Activated T-helper 2 cell treated with anti-CD3 and anti-CD28 coated beads, Interferon-gamma antibody, Interleukin-2, Interleukin-4, amounts not matched to agents 10 μg/mL and 5 μg/mL and 100 μg/mL, durations not matched to agents 14 hours and 24 hours and 36 hours (primary cell): ENCODE measurements at regions of chr15 and their contacts with region 1.

Region 1: DNA sequence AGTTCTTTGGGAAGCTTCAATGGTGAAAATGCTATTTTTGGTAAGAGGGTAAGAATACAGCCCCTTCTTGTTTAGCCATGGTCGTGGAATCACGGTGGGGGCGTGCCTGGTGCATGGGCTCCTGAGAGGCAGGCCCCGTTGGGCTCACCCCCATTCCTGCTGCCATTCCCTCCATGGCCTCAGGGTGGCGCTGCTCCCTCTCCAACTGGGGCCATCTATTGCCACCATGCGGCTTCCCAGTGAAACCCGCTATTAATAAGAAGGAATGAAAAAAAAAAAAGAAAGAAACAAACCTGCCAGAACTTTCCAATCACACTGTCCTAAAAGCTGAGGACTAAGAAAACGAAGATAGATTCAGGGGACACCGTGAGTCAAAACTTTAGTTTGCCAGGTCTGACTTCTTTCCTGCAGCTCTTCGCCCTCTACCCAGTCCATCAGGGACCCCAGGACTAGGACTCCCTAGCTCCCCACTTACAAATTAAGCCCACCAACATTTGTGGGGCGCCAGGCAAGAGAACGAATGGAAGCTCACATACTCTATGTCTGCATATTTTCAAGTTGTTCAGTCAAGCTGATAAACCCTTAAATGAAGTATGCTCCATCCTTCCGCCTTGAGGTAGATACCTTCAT is 30.6 kb upstream of the ABHD2 start:
- DNase-seq: peak; percentile 72
- H3K4me3 Mint-ChIP-seq: no peak overlapping the region
- H3K27ac Mint-ChIP-seq: no peak overlapping the region
- H3K4me1 Mint-ChIP-seq: peaks cover 7% of the 10 kb centered on the region
- H3K27me3 Mint-ChIP-seq: no peaks in the 10 kb centered on the region

Region 2: GRCh38 chr15:89009080-89009479 is 48.5 kb before region 1 on chr15:
- intact Hi-C with region 1: no loop called
- DNase-seq: no peak
- H3K4me3 Mint-ChIP-seq: no peak overlapping the region
- H3K27ac Mint-ChIP-seq: no peak overlapping the region
- H3K4me1 Mint-ChIP-seq: peaks cover 2% of the 10 kb centered on the region
- H3K27me3 Mint-ChIP-seq: peaks cover 19% of the 10 kb centered on the region

Region 3: GRCh38 chr15:89129123-89129815 is 71.7 kb after region 1 on chr15:
- intact Hi-C with region 1: loop called (anchors 1 kb)
- DNase-seq: peak; percentile 26
- H3K4me3 Mint-ChIP-seq: no peak overlapping the region
- H3K27ac Mint-ChIP-seq: no peak overlapping the region
- H3K4me1 Mint-ChIP-seq: peaks cover 17% of the 10 kb centered on the region
- H3K27me3 Mint-ChIP-seq: no peaks in the 10 kb centered on the region